ENCODE measurements at regions of chr3 and their contacts with region 1.

Region 1: DNA sequence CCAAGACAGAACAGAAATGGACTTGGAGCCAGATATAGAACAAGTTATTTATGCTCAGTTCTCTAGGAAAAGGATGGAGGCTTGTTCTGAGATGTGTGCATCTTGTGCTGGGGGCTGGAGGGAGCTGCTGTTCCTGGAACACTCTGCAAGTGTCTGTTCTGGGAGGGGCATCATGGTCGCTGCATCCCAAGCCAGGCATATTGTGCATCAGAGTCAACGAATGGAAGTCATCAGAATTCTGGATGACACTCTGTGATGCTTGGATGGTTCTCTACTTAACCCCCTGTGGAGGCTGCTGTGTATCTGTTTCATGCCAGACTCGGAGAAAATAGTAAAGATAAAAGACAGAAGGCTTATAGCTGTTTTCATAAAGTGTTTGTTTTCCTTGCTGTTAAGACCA is 34.7 kb downstream of the RPL22L1 start:
- DNase-seq: no peak
- ATAC-seq: no peak
- H3K4me3 ChIP-seq: no peak overlapping the region
- H3K4me3 Mint-ChIP-seq: no peak overlapping the region
- H3K27ac ChIP-seq: no peak overlapping the region
- H3K27ac Mint-ChIP-seq: no peak overlapping the region
- H3K4me1 ChIP-seq: no peaks in the 10 kb centered on the region
- H3K4me1 Mint-ChIP-seq: no peaks in the 10 kb centered on the region
- H3K27me3 ChIP-seq: peaks cover 0 to 12% of the 10 kb centered on the region in 2 experiments
- H3K27me3 Mint-ChIP-seq: peaks cover 26 to 32% of the 10 kb centered on the region in 2 donors

Region 2: DNA sequence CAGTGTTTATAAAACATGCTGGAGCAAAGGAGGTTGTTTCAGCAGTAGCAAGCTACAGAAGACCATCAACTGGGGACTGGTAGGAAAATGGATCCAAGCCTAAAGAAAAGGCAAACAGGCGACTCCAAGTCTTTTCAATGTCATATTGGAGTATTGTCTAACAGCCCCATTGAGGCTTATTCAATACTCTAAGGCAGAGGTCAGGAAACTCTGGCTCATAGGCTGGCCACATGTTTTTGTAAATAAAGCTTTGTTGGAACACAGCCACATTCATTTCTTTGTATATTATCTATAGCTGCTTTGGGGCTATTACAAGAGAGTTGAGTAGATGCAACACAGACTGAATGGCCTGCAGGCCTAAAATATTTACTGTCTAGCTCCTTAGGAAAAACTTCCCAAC is 42.9 kb before region 1 on chr3:
- CTCF ChIA-PET with region 1: no interaction called
- POLR2A ChIA-PET with region 1: no interaction called
- DNase-seq: no peak
- ATAC-seq: no peak
- H3K4me3 ChIP-seq: no peak overlapping the region
- H3K4me3 Mint-ChIP-seq: no peak overlapping the region
- H3K27ac ChIP-seq: no peak overlapping the region
- H3K27ac Mint-ChIP-seq: no peak overlapping the region
- H3K4me1 ChIP-seq: no peaks in the 10 kb centered on the region
- H3K4me1 Mint-ChIP-seq: no peaks in the 10 kb centered on the region
- H3K27me3 ChIP-seq: no peaks in the 10 kb centered on the region
- H3K27me3 Mint-ChIP-seq: peaks cover 7 to 24% of the 10 kb centered on the region in 2 donors

Region 3: GRCh38 chr3:170811928-170812591 is 23.3 kb before region 1 on chr3:
- CTCF ChIA-PET with region 1: interaction called in 1 of 2 experiments, 11 read pairs
- POLR2A ChIA-PET with region 1: no interaction called
- DNase-seq: peak; percentile 23 to 80 (median 52)
- ATAC-seq: peak; percentile 81 to 86 (median 84)
- H3K4me3 ChIP-seq: no peak overlapping the region
- H3K4me3 Mint-ChIP-seq: no peak overlapping the region
- H3K27ac ChIP-seq: no peak overlapping the region
- H3K27ac Mint-ChIP-seq: no peak overlapping the region
- H3K4me1 ChIP-seq: no peaks in the 10 kb centered on the region
- H3K4me1 Mint-ChIP-seq: peaks cover 0 to 3% (median 2%) of the 10 kb centered on the region in 3 donors
- H3K27me3 ChIP-seq: peaks cover 0 to 3% of the 10 kb centered on the region in 2 experiments
- H3K27me3 Mint-ChIP-seq: no peaks in the 10 kb centered on the region

Region 4: DNA sequence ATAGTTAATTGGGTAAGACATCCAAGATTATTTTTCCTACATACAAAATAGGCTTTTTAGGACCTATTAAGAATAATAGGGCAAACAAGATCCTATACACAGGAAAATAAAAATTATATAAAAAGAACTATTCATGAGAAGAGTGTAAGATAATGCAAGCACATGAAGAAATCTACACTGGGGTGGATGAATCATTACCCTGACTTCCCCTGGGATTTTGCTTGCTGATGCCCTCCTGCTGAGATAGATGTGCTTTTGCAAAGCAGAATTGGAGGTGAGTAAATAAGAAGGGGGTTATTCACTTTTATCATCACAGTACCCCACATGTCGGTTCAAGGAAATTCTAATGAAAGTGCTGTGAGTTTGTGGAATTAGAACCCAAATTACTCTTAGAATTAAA is 142.6 kb after region 1 on chr3:
- CTCF ChIA-PET with region 1: no interaction called
- POLR2A ChIA-PET with region 1: no interaction called
- DNase-seq: no peak
- ATAC-seq: no peak
- H3K4me3 ChIP-seq: no peak overlapping the region
- H3K4me3 Mint-ChIP-seq: no peak overlapping the region
- H3K27ac ChIP-seq: no peak overlapping the region
- H3K27ac Mint-ChIP-seq: no peak overlapping the region
- H3K4me1 ChIP-seq: no peaks in the 10 kb centered on the region
- H3K4me1 Mint-ChIP-seq: no peaks in the 10 kb centered on the region
- H3K27me3 ChIP-seq: peaks cover 0 to 8% of the 10 kb centered on the region in 2 experiments
- H3K27me3 Mint-ChIP-seq: peaks cover 19 to 24% of the 10 kb centered on the region in 2 donors

Region 5: GRCh38 chr3:171077261-171077660 is 241.9 kb after region 1 on chr3:
- CTCF ChIA-PET with region 1: no interaction called
- POLR2A ChIA-PET with region 1: no interaction called
- DNase-seq: no peak
- ATAC-seq: no peak
- H3K4me3 ChIP-seq: no peak overlapping the region
- H3K4me3 Mint-ChIP-seq: no peak overlapping the region
- H3K27ac ChIP-seq: no peak overlapping the region
- H3K27ac Mint-ChIP-seq: no peak overlapping the region
- H3K4me1 ChIP-seq: no peaks in the 10 kb centered on the region
- H3K4me1 Mint-ChIP-seq: no peaks in the 10 kb centered on the region
- H3K27me3 ChIP-seq: no peaks in the 10 kb centered on the region
- H3K27me3 Mint-ChIP-seq: no peaks in the 10 kb centered on the region

Measured in T-cell (primary cell).